ENCODE measurements at regions of chr21 and their contacts with region 1.

Region 1: DNA sequence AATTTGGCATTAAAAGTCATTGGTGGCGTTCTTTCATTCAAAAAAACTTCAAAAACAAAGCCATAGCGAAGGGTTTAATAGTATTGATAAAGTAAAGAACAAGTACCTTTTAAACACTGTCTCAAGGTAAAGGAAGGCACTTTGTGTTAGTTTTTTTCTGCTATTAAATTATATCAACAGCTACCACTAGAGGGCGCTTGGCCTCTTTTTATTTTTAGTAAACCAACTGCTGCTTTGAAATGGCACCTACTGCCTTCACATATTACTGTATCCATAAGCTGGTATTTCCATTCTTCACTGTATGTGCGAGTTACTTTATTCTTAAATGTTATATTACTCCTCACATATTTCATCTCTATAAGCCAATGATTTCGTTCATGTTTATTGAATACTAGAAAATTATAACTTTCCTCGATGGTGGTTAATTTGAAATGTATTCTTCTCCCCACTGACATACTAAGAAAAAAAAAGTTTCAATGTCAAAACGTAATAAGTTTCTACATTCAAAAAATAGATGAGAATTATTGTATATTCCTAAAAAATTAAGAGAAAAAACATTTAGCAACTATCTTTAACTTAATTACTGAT is 125.7 kb upstream of the CXADR start:
- DNase-seq: peak; percentile 67
- H3K4me3 ChIP-seq: no peak overlapping the region
- H3K27ac ChIP-seq: no peak overlapping the region
- H3K4me1 ChIP-seq: no peaks in the 10 kb centered on the region
- H3K27me3 ChIP-seq: peaks cover 0 to 12% of the 10 kb centered on the region in 2 experiments
- CTCF ChIP-seq: peak; percentile 23 to 54
- POLR2A ChIP-seq: no peak

Region 2: GRCh38 chr21:17402937-17403336 is 15.8 kb after region 1 on chr21:
- CTCF ChIA-PET with region 1: interaction called, 14 read pairs
- POLR2A ChIA-PET with region 1: no interaction called
- dilution Hi-C with region 1: no loop called
- intact Hi-C with region 1: no loop called
- DNase-seq: no peak
- H3K4me3 ChIP-seq: no peak overlapping the region
- H3K27ac ChIP-seq: no peak overlapping the region
- H3K4me1 ChIP-seq: no peaks in the 10 kb centered on the region
- H3K27me3 ChIP-seq: peaks cover 2 to 4% of the 10 kb centered on the region in 2 experiments
- CTCF ChIP-seq: no peak
- POLR2A ChIP-seq: no peak

Region 3: DNA sequence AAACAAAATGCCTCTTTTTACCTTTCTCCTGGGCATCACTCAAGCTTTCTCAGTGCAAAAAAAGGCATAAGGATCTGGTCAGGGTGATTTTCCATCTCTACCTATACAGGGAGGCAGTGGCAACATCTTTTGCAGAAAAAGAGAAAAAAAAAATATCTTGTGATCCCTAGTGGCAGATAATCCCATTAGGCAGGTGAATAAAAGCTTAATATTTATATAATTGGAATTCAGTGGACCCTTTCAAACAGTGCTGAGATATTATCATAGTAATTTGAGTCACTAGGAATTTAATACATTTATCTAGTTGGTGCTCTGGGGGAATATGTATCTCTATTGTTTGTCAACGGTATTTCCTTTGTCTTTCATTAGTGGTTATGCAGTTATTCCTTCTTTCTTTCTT is 95.8 kb after region 1 on chr21:
- CTCF ChIA-PET with region 1: interaction called, 11 read pairs
- POLR2A ChIA-PET with region 1: no interaction called
- dilution Hi-C with region 1: no loop called
- intact Hi-C with region 1: no loop called
- DNase-seq: no peak
- H3K4me3 ChIP-seq: no peak overlapping the region
- H3K27ac ChIP-seq: no peak overlapping the region
- H3K4me1 ChIP-seq: peaks cover 16% of the 10 kb centered on the region
- H3K27me3 ChIP-seq: no peaks in the 10 kb centered on the region
- CTCF ChIP-seq: no peak
- POLR2A ChIP-seq: no peak

Region 4: GRCh38 chr21:17527240-17527639 is 140.1 kb after region 1 on chr21:
- CTCF ChIA-PET with region 1: interaction called, 18 read pairs
- POLR2A ChIA-PET with region 1: no interaction called
- dilution Hi-C with region 1: no loop called
- intact Hi-C with region 1: no loop called
- DNase-seq: peak; percentile 86
- H3K4me3 ChIP-seq: peak overlapping the region in 1 of 3 experiments; percentile 33
- H3K27ac ChIP-seq: peak overlapping the region; percentile 88
- H3K4me1 ChIP-seq: peaks cover 31% of the 10 kb centered on the region
- H3K27me3 ChIP-seq: no peaks in the 10 kb centered on the region
- CTCF ChIP-seq: no peak
- POLR2A ChIP-seq: no peak

Region 5: GRCh38 chr21:17542371-17543011 is 155.4 kb after region 1 on chr21:
- CTCF ChIA-PET with region 1: interaction called, 18 read pairs
- POLR2A ChIA-PET with region 1: no interaction called
- dilution Hi-C with region 1: no loop called
- intact Hi-C with region 1: no loop called
- DNase-seq: peak; percentile 54
- H3K4me3 ChIP-seq: no peak overlapping the region
- H3K27ac ChIP-seq: no peak overlapping the region
- H3K4me1 ChIP-seq: peaks cover 11% of the 10 kb centered on the region
- H3K27me3 ChIP-seq: peaks cover 0 to 2% of the 10 kb centered on the region in 2 experiments
- CTCF ChIP-seq: no peak
- POLR2A ChIP-seq: no peak

Region 6: DNA sequence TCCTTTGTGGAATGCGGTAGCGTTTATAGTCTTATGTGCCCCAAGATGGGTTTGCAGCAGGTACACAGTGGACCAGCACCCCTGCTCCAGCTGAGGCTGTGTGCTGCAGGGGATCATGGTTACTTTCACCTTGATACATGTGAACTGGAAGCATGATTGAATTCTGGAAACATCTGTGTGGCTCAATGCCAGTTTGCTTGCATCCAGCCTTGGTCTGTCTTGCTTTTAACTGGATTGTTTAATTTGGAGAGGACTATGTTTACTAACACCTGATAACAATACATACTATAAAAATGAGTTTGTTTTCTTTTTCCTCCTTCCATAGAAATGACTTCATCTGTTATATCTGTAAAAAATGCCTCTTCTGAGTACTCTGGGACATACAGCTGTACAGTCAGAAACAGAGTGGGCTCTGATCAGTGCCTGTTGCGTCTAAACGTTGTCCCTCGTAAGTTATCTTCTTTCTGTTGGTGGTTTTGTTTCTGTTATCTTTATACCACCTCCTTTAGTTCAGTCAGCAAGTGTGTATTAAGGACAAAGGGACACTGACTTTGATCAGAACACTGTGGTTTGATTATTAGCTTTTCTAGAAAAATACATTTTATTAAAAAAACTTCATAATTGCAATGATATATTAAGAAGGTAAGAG is 173.4 kb after region 1 on chr21:
- CTCF ChIA-PET with region 1: interaction called, 312 read pairs
- POLR2A ChIA-PET with region 1: no interaction called
- dilution Hi-C with region 1: no loop called
- intact Hi-C with region 1: no loop called
- DNase-seq: peak; percentile 12
- H3K4me3 ChIP-seq: no peak overlapping the region
- H3K27ac ChIP-seq: no peak overlapping the region
- H3K4me1 ChIP-seq: no peaks in the 10 kb centered on the region
- H3K27me3 ChIP-seq: no peaks in the 10 kb centered on the region
- CTCF ChIP-seq: no peak
- POLR2A ChIP-seq: no peak

Region 7: DNA sequence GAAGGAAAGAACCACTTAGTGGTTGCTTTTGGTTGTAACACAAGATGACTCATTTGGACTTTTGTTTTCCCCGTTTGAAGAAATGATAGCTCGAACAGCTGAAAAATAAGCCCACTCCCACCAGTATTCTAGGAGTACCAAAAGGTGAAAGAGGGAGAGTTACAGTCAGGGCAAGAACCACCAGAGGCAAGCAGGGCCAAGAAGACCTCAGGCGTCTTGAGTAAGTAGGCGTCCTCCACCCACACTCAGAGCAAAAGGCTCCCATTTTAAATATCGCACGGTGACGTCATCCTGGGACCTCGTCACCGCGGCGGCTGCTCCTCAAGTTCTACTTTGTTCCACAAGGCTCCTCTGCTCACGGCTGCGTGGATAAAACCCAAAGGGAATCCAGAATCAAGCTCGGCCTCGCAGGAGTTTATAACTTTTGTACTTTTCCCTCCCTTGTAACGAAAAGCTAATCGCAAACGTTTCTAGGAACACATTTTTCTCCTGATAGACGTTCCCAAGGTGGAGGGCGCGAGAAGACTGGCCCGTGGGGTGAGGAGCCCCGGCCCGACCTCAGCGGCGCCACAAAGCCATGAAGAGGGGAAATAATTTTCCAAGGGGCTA is 224.4 kb after region 1 on chr21:
- CTCF ChIA-PET with region 1: interaction called, 25 read pairs
- POLR2A ChIA-PET with region 1: no interaction called
- dilution Hi-C with region 1: no loop called
- intact Hi-C with region 1: no loop called
- DNase-seq: peak; percentile 93
- H3K4me3 ChIP-seq: peak overlapping the region; percentile 76 to 94 (median 93)
- H3K27ac ChIP-seq: peak overlapping the region; percentile 97
- H3K4me1 ChIP-seq: peaks cover 10% of the 10 kb centered on the region
- H3K27me3 ChIP-seq: peaks cover 0 to 2% of the 10 kb centered on the region in 2 experiments
- CTCF ChIP-seq: no peak
- POLR2A ChIP-seq: peak; percentile 27

Measured in endothelial cell of umbilical vein (primary cell).